ENCODE measurements at regions of chr2 and their contacts with region 1.

Region 1: DNA sequence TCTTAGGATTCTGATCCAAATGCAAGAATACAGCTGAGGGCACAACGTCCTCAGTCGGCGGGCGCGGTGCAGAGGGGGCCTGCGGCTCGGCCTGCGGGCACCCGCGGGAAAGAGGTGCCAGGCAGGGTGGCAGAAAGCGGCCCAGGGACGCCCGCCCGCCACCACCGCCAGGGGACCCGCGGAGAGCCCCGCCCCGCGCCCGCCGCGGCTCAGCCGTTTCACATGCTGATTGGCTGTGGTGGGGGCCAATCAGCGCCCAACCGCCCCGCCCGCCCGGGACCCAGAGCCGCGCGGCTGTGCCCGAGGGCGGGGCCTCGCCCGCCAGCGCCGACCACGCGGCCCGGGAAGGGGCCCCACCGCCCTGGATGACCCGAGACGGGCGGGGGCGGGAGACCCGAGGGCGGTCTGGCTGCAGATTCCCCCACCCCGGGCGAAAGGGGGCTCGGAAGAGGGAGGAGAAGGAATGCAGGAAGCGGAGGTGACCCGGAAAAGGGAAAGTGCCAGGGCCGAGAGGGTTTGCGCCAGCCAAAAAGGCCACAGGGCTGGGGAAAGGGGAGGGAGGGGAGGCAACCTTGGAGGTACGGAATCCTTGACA is 8.0 kb downstream of the IRS1 start:
- DNase-seq: peak; percentile 69 to 89
- H3K4me3 ChIP-seq: peak overlapping the region; percentile 95
- H3K27ac ChIP-seq: peak overlapping the region; percentile 84
- H3K4me1 ChIP-seq: peaks cover 44% of the 10 kb centered on the region
- H3K27me3 ChIP-seq: no peaks in the 10 kb centered on the region
- CTCF ChIP-seq: no peak

Region 2: GRCh38 chr2:226327830-226328229 is 463.8 kb before region 1 on chr2:
- CTCF ChIA-PET with region 1: no interaction called
- POLR2A ChIA-PET with region 1: interaction called, 13 read pairs
- intact Hi-C with region 1: no loop called
- DNase-seq: peak; percentile 7 to 80
- H3K4me3 ChIP-seq: no peak overlapping the region
- H3K27ac ChIP-seq: peak overlapping the region; percentile 30
- H3K4me1 ChIP-seq: no peaks in the 10 kb centered on the region
- H3K27me3 ChIP-seq: no peaks in the 10 kb centered on the region
- CTCF ChIP-seq: no peak

Region 3: DNA sequence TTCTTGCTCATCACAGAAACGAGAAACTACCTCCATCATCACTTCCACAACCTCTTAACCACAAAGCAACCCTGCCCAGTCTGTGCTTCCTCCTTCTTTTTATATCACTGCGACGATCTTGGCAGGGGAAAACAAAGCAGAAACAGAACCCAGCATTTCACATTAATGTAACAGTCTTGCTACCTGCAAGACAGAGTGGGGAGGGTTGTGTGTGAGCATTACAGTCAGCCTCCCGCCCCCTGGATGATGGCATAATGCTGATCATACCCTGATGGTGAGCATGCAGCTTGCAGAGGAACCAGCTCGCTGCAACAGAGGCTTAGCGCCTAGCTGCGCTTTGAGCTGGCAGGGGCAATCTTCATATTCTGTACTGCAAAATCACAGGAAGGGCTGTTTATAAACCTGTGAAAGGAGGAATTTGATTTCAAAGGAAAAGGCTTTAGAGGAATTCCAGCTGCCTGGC is 368.1 kb before region 1 on chr2:
- CTCF ChIA-PET with region 1: interaction called, 9 read pairs
- POLR2A ChIA-PET with region 1: no interaction called
- intact Hi-C with region 1: loop called (anchors 2 kb)
- DNase-seq: peak in 1 of 2 experiments; percentile 41
- H3K4me3 ChIP-seq: no peak overlapping the region
- H3K27ac ChIP-seq: no peak overlapping the region
- H3K4me1 ChIP-seq: peaks cover 31% of the 10 kb centered on the region
- H3K27me3 ChIP-seq: no peaks in the 10 kb centered on the region
- CTCF ChIP-seq: no peak

Region 4: GRCh38 chr2:226661789-226662545 is 129.6 kb before region 1 on chr2:
- CTCF ChIA-PET with region 1: no interaction called
- POLR2A ChIA-PET with region 1: no interaction called
- intact Hi-C with region 1: loop called (anchors 2 kb)
- DNase-seq: peak; percentile 81 to 95
- H3K4me3 ChIP-seq: peak overlapping the region; percentile 14; the same call in 1 of the 2 replicates
- H3K27ac ChIP-seq: peak overlapping the region; percentile 92
- H3K4me1 ChIP-seq: peaks cover 27% of the 10 kb centered on the region
- H3K27me3 ChIP-seq: no peaks in the 10 kb centered on the region
- CTCF ChIP-seq: no peak

Region 5: GRCh38 chr2:226733189-226733858 is 58.3 kb before region 1 on chr2:
- CTCF ChIA-PET with region 1: no interaction called
- POLR2A ChIA-PET with region 1: no interaction called
- intact Hi-C with region 1: loop called (anchors 10 kb)
- DNase-seq: no peak
- H3K4me3 ChIP-seq: no peak overlapping the region
- H3K27ac ChIP-seq: no peak overlapping the region
- H3K4me1 ChIP-seq: no peaks in the 10 kb centered on the region
- H3K27me3 ChIP-seq: no peaks in the 10 kb centered on the region
- CTCF ChIP-seq: no peak

Measured in PC-9 (cell line).